Breast epithelium (tissue), 4 donors: ENCODE measurements at regions of chr14 and their contacts with region 1.

Region 1: GRCh38 chr14:100168506-100168905 is 9.1 kb upstream of the DEGS2 start:
- DNase-seq: no peak
- H3K4me3 ChIP-seq: no peak overlapping the region
- H3K27ac ChIP-seq: no peak overlapping the region
- H3K4me1 ChIP-seq: no peaks in the 10 kb centered on the region
- H3K27me3 ChIP-seq: no peaks in the 10 kb centered on the region
- CTCF ChIP-seq: no peak
- POLR2A ChIP-seq: no peak

Region 2: DNA sequence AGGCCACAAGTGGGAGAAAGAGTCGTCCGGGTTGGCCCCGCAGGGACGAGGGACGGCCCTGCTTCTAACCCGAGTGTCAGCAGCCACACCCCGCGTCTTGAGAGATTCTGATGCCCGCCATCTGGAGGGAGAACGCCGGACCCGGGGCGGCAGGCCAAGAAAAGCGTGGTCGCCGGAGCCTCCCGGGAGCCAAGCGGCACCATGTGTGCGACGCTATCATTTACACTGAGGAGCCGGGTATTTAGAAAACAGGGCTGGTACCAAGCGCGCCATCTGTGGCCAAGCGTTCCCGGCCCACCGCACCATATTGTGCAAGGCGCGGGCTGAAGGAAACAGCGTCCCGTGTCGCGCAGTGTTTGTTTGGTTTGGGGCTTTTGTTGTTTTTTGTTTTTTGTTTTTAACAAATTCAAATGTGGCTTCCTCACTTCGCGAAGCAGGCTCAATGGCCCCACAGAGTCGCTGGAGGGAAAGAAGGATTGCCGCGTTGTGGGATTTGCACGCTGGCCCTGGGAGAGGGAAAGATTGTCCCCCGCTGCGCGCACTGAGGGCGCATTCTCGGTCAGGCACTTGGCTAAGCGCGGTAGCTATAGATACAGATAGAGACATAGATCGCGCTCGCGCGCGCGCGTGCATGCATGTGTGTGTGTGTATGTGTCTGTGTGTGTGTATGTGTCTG is 1050.3 kb before region 1 on chr14:
- intact Hi-C with region 1: no loop called
- DNase-seq: peak in 1 of 2 donors; percentile 6
- H3K4me3 ChIP-seq: no peak overlapping the region
- H3K27ac ChIP-seq: no peak overlapping the region
- H3K4me1 ChIP-seq: no peaks in the 10 kb centered on the region
- H3K27me3 ChIP-seq: peaks cover 0 to 38% of the 10 kb centered on the region in 2 donors
- CTCF ChIP-seq: no peak
- POLR2A ChIP-seq: no peak

Region 3: DNA sequence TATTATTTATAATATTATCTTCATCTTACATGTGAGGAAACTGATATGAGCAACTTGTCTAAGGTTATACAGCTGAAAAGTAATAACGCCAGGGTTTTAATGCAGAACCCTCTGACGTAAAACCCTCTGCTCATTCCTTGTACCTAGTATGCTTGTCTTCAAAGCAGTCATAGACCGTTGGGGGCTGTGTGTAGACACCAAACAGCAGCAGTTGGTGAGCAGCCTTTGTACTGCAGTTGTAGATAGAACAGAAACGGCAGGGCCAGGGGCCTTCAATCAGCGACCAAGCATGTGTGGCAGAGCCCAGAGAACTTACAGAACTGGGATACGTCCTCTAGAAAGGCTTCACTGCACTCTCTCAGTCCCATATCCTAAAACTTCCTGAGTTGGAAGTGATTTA is 75.2 kb before region 1 on chr14:
- intact Hi-C with region 1: no loop called
- DNase-seq: no peak
- H3K4me3 ChIP-seq: no peak overlapping the region
- H3K27ac ChIP-seq: no peak overlapping the region
- H3K4me1 ChIP-seq: no peaks in the 10 kb centered on the region
- H3K27me3 ChIP-seq: no peaks in the 10 kb centered on the region
- CTCF ChIP-seq: no peak
- POLR2A ChIP-seq: no peak

Region 4: DNA sequence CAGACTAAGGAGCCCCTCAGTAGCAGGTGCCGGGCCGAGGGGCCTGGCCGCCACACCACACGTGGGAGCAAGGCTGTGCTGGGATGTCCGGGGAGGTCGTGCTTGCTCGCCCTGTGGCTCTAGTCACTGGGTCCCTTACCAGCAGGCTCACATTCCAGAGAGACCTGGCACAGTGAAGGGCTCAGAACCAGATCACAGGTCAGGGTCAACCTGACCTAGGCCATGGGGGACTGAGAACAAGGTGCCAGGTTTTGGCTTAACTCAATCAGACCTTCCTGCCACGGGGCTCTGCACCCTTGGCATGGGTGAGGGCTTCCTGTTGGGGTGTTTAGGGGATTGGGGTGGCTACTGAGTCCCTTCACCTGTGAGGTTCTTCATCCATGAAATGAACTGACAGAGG is 31.3 kb before region 1 on chr14:
- intact Hi-C with region 1: loop called (anchors 1 kb)
- DNase-seq: no peak
- H3K4me3 ChIP-seq: no peak overlapping the region
- H3K27ac ChIP-seq: no peak overlapping the region
- H3K4me1 ChIP-seq: peaks cover 0 to 4% of the 10 kb centered on the region in 2 donors
- H3K27me3 ChIP-seq: no peaks in the 10 kb centered on the region
- CTCF ChIP-seq: no peak
- POLR2A ChIP-seq: no peak